ENCODE measurements at regions of chr19 and their contacts with region 1.

Region 1: DNA sequence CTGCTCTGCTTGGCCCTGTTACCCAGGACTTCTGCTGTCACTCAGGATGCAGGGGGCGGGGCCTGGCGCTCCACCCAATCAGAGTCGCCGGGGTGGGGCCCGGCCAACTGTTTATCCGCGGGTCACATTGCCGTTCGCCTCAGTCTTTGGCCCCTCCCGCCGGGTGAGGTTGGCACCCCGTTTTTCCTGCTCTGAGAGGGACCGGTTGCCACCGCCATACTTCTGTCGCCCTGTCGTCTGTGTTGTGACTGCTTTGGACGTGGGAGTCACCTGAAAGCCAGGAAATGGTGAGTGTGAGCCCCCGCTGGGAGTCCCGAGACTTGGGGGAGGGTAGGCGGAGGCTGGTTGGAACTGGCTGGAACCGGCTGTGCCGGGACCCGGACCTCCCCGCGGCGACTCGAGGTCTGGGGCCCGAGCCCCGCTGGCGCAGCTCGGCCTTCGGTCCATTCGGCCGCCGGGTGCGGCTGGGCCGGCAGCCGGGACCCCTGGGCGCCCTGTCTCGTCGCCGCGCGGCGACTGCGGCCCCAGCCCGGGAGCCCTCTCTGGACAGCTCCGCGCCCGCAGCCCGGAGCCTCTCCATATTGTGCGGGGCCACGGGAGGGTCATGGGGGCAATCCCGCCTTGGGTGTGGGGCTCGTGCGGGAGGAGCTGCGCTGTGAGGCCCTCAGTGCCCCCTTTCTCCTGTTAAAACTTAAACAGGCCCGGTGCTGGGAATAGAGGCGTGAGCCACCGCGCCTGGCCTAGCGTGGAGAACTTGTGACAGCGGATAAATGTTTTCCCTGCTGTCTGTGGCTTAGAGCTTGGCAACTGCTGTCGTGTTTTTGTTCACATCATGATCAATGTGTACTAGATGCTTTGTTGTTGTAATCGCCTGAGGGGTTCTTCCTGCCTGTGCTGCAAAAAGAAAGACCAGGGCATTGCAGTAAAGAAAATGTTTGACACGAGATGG is at the start of gene ZNF844:
- DNase-seq: peak; percentile 85
- H3K4me3 Mint-ChIP-seq: peak within 1 kb of the TSS; percentile 80
- H3K27ac Mint-ChIP-seq: no peak within 1 kb of the TSS
- H3K4me1 Mint-ChIP-seq: peaks cover 6% of the 10 kb centered on the region
- H3K27me3 Mint-ChIP-seq: no peaks in the 10 kb centered on the region
- total RNA-seq, gene ZNF844: 1.6 TPM

Region 2: DNA sequence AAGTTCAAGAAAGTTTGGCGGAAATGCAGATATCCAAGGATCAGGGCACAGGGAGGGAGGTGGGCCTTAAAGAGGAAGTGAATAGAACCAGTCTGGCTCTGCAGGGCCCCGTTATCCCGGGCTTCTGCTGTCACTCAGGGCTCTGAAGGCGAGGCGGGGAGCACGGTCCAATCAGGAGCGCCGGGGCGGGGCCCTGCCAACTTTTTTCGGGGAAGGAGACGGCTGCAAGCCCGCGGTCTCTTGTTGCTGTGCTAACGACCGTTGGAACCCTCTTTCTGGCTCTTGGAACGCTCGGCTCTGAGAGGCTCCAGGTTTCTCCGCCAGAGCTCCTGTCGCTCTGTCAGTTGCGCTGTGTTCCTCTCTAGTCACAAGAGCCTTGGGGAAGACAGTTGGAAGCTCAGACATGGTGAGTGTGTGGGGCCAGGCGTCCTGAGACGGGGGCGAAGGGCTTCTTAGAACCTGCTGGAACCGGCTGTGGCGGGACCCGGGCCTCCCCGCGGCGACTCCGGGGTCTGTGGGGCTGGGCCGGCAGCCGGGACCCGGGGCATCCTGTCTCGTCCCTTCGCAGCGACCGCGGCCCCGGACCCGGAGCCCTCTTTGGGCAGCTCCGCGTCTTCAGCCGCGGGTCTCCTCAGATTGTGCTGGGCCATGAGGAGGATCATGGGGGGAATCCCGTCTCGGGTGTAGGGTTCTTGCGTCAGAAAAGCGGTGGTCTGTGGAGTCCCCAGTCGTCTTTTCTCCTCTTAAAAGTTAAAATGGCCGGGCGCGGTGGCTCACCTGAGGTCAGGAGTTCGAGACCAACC is 27.4 kb after region 1 on chr19:
- CTCF ChIA-PET with region 1: interaction called, 26 read pairs
- intact Hi-C with region 1: no loop called
- DNase-seq: peak; percentile 86
- H3K4me3 Mint-ChIP-seq: peak overlapping the region; percentile 83
- H3K27ac Mint-ChIP-seq: peak overlapping the region; percentile 73
- H3K4me1 Mint-ChIP-seq: peaks cover 6% of the 10 kb centered on the region
- H3K27me3 Mint-ChIP-seq: peaks cover 14% of the 10 kb centered on the region

Region 3: GRCh38 chr19:12139885-12140547 is 75.2 kb after region 1 on chr19 and contains the start of gene ZNF20:
- CTCF ChIA-PET with region 1: interaction called, 27 read pairs
- intact Hi-C with region 1: no loop called
- DNase-seq: peak; percentile 95
- H3K4me3 Mint-ChIP-seq: peak within 1 kb of the TSS; percentile 92
- H3K27ac Mint-ChIP-seq: peak within 1 kb of the TSS; percentile 65
- H3K4me1 Mint-ChIP-seq: peaks cover 32% of the 10 kb centered on the region
- H3K27me3 Mint-ChIP-seq: no peaks in the 10 kb centered on the region
- total RNA-seq, gene ZNF20: 2.1 to 3.1 TPM

Region 4: GRCh38 chr19:12162882-12163806 is 98.3 kb after region 1 on chr19 and contains the start of gene ZNF136:
- CTCF ChIA-PET with region 1: interaction called, 10 read pairs
- intact Hi-C with region 1: no loop called
- DNase-seq: peak; percentile 99
- H3K4me3 Mint-ChIP-seq: peak within 1 kb of the TSS; percentile 90
- H3K27ac Mint-ChIP-seq: peak within 1 kb of the TSS; percentile 91
- H3K4me1 Mint-ChIP-seq: peaks cover 42% of the 10 kb centered on the region
- H3K27me3 Mint-ChIP-seq: no peaks in the 10 kb centered on the region
- total RNA-seq, gene ZNF136: 8.4 to 11.6 TPM

Region 5: GRCh38 chr19:12230751-12231733 is 166.2 kb after region 1 on chr19:
- CTCF ChIA-PET with region 1: no interaction called
- intact Hi-C with region 1: no loop called
- DNase-seq: no peak
- H3K4me3 Mint-ChIP-seq: no peak overlapping the region
- H3K27ac Mint-ChIP-seq: no peak overlapping the region
- H3K4me1 Mint-ChIP-seq: no peaks in the 10 kb centered on the region
- H3K27me3 Mint-ChIP-seq: no peaks in the 10 kb centered on the region